ENCODE measurements at regions of chr20 and their contacts with region 1.

Region 1: GRCh38 chr20:753136-753535 is 15.2 kb downstream of the SLC52A3 start:
- DNase-seq: no peak
- ATAC-seq: no peak

Region 2: GRCh38 chr20:687468-688203 is 65.5 kb before region 1 on chr20:
- intact Hi-C with region 1: loop called (anchors 2 kb)
- DNase-seq: no peak
- ATAC-seq: no peak